ENCODE measurements at regions of chr20 and their contacts with region 1.

Region 1: DNA sequence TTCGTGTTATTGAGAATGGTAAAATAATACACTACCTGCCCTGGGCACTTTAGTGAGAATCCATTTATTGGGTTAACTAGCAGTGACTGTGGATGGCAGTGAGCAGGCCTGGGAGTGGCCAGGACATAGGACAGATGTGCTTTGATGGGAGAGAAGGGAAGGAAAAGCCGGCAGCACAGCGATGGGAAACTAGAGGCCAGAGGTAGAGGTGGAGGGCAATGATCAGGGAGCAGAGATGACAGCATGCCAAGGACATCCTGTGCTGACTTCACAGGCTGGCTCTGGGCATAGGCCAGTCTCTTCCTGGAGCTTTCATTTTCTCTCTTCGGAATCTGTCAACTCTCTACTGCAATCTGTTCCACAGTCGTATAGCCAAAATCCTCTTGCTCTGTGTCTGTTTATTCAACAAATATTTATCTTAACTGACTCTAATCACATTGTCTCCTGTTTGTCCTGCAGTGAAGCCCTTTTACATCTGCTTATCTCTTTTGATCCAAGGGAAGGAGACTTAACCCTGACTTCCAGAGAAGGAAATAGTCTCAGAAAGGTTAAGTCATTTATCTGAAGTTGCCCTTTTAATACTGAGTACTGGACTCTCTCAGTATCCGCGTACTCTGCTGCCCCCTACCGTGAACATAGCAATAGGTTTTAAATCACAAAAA is 18.4 kb upstream of the MMP24 start:
- DNase-seq: peak; percentile 92
- H3K4me3 ChIP-seq: no peak overlapping the region
- H3K27ac ChIP-seq: peak overlapping the region; percentile 53
- H3K4me1 ChIP-seq: no peaks in the 10 kb centered on the region
- H3K27me3 ChIP-seq: no peaks in the 10 kb centered on the region
- CTCF ChIP-seq: peak; percentile 72

Region 2: DNA sequence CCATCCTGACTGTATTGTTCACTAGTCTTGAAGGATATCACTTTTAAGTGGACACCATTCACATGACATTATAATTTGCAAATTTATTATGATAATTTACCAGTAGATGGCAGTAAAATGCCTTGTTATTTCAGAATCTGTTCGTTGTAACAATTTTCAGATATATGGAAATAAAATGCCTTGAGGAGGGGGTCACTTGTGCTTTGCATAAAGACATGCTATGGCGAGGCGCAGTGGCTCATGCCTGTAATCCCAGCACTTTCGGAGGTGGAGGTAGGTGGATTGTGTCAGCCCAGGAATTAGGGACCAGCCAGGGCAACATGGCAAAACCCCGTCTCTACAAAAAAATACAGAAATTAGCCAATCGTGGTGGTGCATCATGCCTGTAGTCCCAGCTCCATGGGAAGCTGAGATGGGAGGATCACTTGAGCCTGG is 373.6 kb before region 1 on chr20:
- intact Hi-C with region 1: loop called (anchors 5 kb)
- DNase-seq: no peak
- H3K4me3 ChIP-seq: no peak overlapping the region
- H3K27ac ChIP-seq: no peak overlapping the region
- H3K4me1 ChIP-seq: no peaks in the 10 kb centered on the region
- H3K27me3 ChIP-seq: no peaks in the 10 kb centered on the region
- CTCF ChIP-seq: no peak

Region 3: GRCh38 chr20:34861386-34862084 is 346.5 kb before region 1 on chr20:
- intact Hi-C with region 1: loop called (anchors 10 kb)
- DNase-seq: peak; percentile 71
- H3K4me3 ChIP-seq: no peak overlapping the region
- H3K27ac ChIP-seq: no peak overlapping the region
- H3K4me1 ChIP-seq: no peaks in the 10 kb centered on the region
- H3K27me3 ChIP-seq: no peaks in the 10 kb centered on the region
- CTCF ChIP-seq: no peak

Region 4: GRCh38 chr20:35092524-35093266 is 115.4 kb before region 1 on chr20 and contains the start of gene TRPC4AP:
- intact Hi-C with region 1: loop called (anchors 5 kb)
- DNase-seq: peak; percentile 87
- H3K4me3 ChIP-seq: peak within 1 kb of the TSS; percentile 72
- H3K27ac ChIP-seq: peak within 1 kb of the TSS; percentile 87
- H3K4me1 ChIP-seq: peaks cover 10% of the 10 kb centered on the region
- H3K27me3 ChIP-seq: no peaks in the 10 kb centered on the region
- CTCF ChIP-seq: peak; percentile 98
- total RNA-seq, gene TRPC4AP: 52.8 to 63.2 TPM

Region 5: DNA sequence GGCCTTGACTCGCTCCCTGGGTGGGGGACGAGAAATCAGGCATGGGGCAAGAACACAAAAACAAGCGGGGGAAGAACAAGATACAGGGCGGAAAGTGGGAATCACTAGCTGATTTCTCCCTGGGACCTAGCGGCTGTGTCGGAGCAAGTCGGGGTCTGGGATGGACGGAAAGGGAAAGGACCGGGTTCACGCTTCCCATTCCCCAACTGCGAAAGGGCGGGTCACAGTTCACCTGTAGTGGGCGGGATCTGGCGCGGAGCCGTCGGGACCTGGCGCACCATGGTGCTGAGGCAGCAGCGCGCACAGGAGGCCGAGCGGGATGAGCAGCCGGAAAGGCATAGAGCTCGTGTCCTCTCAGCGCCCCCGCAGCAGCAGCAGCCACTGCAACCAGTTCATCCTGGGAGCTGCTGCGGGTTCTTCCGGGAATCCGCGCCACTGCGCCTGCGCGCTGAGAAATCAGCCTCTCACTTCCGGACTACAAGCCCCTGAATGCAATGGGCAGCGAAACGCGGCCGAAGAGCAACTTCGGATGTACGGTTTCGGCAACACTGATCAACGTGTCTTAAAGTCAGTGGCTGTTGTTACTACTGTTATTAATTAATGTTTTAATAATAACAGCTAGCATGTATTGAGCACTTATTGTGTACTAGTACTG is 61.0 kb before region 1 on chr20 and contains the start of gene EDEM2:
- intact Hi-C with region 1: loop called (anchors 2 kb)
- DNase-seq: peak; percentile 96
- H3K4me3 ChIP-seq: peak within 1 kb of the TSS; percentile 66
- H3K27ac ChIP-seq: peak within 1 kb of the TSS; percentile 90
- H3K4me1 ChIP-seq: peaks cover 8% of the 10 kb centered on the region
- H3K27me3 ChIP-seq: no peaks in the 10 kb centered on the region
- CTCF ChIP-seq: no peak
- total RNA-seq, gene EDEM2: 28.0 to 36.0 TPM